Endothelial cell of umbilical vein (primary cell): ENCODE measurements at regions of chr2 and their contacts with region 1.

Region 1: DNA sequence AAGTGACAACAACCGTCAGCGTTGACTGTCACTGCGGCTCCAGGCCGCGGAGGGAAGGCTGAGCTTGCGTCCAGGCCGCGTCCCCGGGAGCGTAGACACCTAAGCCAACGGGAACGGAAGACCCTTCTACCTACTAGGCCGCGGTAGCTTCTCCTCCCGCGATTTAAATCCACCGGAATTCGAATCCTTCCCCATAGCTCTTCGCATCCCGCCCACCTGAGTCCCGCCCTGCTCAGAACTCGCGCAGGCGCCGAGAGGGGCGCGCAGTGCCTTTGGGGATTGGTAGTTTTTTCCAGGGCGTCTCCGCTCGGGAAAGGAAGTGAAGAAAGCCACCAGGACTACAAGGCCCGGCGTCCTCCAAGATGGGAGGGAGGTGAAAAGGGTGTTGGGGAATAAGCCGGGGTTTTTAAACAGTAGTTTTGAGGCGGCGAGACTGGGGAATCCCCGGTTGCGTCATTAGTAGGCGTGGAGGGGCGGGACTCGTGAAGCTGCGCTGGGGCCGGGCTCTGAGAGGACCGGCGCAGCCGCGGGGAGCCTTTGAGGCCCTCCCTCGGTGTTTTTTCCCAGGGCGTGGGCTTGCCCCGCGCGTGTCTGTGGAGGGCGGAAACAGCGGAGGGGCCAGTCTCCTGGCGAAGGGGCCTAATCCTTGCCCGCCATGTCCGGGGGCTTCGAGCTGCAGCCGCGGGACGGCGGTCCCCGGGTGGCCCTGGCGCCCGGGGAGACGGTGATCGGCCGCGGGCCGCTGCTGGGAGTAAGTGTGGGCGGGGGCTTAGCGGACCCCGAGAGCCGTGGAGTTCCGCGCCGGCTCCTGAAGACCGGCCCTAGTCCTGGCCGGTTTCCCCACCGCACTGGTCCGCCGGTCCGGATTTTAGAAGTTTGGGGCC is at the starts of genes APLF and FBXO48:
- DNase-seq: peak; percentile 99
- H3K4me3 ChIP-seq: peak within 1 kb of the TSS; percentile 80 to 94 (median 85)
- H3K27ac ChIP-seq: peak within 1 kb of the TSS; percentile 74
- H3K4me1 ChIP-seq: peaks cover 7% of the 10 kb centered on the region
- H3K27me3 ChIP-seq: no peaks in the 10 kb centered on the region
- CTCF ChIP-seq: no peak
- POLR2A ChIP-seq: peak; percentile 68
- total RNA-seq, gene APLF: 2.3 and 2.4 TPM in 2 replicates
- total RNA-seq, gene FBXO48: 0.73 and 0.83 TPM in 2 replicates

Region 2: DNA sequence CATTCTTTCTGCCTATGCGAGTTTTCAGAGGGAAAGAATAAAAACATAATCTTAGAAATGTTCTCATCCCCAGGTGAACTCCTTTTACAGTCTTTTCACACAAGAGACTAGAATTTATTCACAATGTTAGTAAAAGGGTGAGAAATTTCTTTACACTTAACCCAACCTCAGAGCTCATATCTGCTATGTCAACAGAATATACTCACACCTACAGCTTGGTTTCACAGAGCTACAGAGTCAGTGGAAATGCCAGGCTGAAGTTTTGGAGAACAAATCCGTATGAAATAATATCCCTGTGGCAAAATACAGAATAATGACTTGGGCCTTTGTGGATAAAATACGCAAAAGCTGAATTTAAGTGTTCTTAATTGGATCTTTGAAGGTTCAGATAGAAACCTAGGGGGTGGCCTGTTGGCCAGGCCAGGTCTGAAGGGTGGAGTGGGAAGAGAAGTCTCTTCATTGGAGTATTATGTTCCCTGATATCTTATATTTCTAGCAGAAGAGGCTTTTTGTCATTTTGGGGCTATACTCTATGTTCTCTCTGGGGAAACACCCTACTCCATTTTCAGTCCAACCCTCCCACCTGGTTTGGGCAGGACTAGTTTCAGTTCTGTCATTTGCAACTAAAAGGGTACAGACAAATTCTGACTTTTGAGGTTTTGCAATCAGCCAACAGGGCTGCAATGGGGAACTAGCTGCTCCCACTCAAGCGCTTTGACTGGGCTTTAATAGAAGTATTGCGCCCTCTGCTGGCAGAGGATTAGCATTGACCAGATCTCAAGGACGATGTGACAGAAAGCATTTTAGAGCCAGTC is 25.9 kb before region 1 on chr2:
- CTCF ChIA-PET with region 1: interaction called, 12 read pairs
- POLR2A ChIA-PET with region 1: no interaction called
- dilution Hi-C with region 1: no loop called
- intact Hi-C with region 1: loop called (anchors 1 kb)
- DNase-seq: peak; percentile 67
- H3K4me3 ChIP-seq: no peak overlapping the region
- H3K27ac ChIP-seq: no peak overlapping the region
- H3K4me1 ChIP-seq: no peaks in the 10 kb centered on the region
- H3K27me3 ChIP-seq: peaks cover 3 to 12% of the 10 kb centered on the region in 2 experiments
- CTCF ChIP-seq: peak; percentile 79 to 83
- POLR2A ChIP-seq: no peak

Region 3: GRCh38 chr2:68594674-68595492 is 127.6 kb after region 1 on chr2:
- CTCF ChIA-PET with region 1: interaction called, 133 read pairs
- POLR2A ChIA-PET with region 1: no interaction called
- dilution Hi-C with region 1: no loop called
- intact Hi-C with region 1: loop called (anchors 1 kb)
- DNase-seq: peak; percentile 63
- H3K4me3 ChIP-seq: no peak overlapping the region
- H3K27ac ChIP-seq: no peak overlapping the region
- H3K4me1 ChIP-seq: no peaks in the 10 kb centered on the region
- H3K27me3 ChIP-seq: peaks cover 0 to 4% of the 10 kb centered on the region in 2 experiments
- CTCF ChIP-seq: peak; percentile 75 to 77
- POLR2A ChIP-seq: no peak

Region 4: GRCh38 chr2:68709421-68709911 is 242.1 kb after region 1 on chr2:
- CTCF ChIA-PET with region 1: interaction called, 305 read pairs
- POLR2A ChIA-PET with region 1: no interaction called
- dilution Hi-C with region 1: no loop called
- intact Hi-C with region 1: loop called (anchors 1 kb)
- DNase-seq: peak; percentile 52
- H3K4me3 ChIP-seq: no peak overlapping the region
- H3K27ac ChIP-seq: no peak overlapping the region
- H3K4me1 ChIP-seq: no peaks in the 10 kb centered on the region
- H3K27me3 ChIP-seq: peaks cover 18 to 45% of the 10 kb centered on the region in 2 experiments
- CTCF ChIP-seq: peak; percentile 72 to 74
- POLR2A ChIP-seq: no peak

Region 5: GRCh38 chr2:68751397-68752339 is 284.3 kb after region 1 on chr2:
- CTCF ChIA-PET with region 1: interaction called, 53 read pairs
- POLR2A ChIA-PET with region 1: no interaction called
- dilution Hi-C with region 1: no loop called
- intact Hi-C with region 1: no loop called
- DNase-seq: peak; percentile 91
- H3K4me3 ChIP-seq: no peak overlapping the region
- H3K27ac ChIP-seq: no peak overlapping the region
- H3K4me1 ChIP-seq: peaks cover 7% of the 10 kb centered on the region
- H3K27me3 ChIP-seq: peaks cover 0 to 4% of the 10 kb centered on the region in 2 experiments
- CTCF ChIP-seq: peak; percentile 88 to 92
- POLR2A ChIP-seq: no peak

Region 6: DNA sequence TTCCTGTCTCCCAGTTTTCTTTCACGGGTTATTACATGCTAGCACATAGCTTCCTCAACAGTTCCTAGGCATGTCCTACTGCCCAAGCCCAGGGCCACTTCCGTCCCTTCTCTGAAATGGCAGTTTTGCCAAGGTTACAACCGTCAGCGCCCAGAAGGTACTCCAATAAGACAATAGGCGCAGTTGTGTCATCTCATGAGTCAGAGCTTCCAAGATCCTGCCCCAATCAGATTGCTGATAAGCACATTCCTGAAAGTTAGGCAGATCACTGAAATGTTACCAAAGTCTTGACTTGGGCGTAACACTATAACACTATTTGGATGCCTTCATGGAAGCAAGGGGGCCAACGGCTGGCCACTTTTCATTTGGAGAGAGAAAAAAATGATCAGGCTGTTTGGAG is 451.2 kb after region 1 on chr2:
- CTCF ChIA-PET with region 1: interaction called, 13 read pairs
- POLR2A ChIA-PET with region 1: no interaction called
- dilution Hi-C with region 1: no loop called
- intact Hi-C with region 1: no loop called
- DNase-seq: no peak
- H3K4me3 ChIP-seq: no peak overlapping the region
- H3K27ac ChIP-seq: no peak overlapping the region
- H3K4me1 ChIP-seq: peaks cover 5% of the 10 kb centered on the region
- H3K27me3 ChIP-seq: peaks cover 0 to 4% of the 10 kb centered on the region in 2 experiments
- CTCF ChIP-seq: no peak
- POLR2A ChIP-seq: no peak